K562 (cell line): ENCODE measurements at regions of chr3 and their contacts with region 1.

Region 1: DNA sequence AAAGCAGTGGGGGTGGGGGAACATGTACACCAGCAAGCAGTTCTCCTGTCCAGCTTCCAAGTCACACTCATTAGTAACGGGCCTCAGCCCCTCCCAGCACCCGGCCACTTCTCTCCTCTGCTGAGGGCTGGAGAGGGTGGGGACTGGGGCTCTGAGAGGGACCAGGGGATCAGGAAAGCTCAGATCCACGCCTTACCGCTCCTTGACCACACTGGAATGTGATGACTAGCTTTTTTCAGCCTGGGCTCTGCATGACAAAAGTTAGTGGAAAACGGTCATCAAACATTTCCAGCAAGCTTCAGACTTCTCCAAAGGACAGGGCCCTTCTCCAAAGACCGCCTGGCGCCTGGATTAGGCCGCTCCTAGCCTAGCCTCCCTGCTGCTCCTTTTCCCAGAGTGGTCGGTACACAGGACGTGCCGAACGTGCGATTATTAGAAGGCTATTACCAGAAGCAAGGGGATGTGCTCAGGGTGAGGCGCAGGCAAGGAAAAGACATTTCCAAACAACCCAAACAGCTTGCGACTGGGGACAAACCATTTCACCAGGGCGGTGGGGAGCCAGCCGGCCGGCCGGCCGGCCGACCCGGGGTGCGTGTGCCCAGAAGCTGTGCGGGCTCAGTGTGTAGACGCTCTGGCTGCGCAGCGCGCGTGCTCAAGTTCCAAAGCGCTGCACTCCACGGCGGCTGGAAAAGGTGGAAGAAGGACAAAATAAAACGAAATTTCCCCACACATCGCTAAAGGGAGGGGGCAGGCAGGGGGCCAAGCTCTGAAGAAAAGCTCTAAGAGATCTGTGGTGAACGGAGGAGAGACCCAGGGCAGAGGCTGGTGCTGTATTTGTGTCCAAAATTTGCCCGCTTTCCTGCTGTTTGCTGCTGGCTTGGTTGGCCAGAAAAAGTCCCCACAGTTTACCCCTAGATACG is 51.0 kb upstream of the SSR3 start:
- DNase-seq: peak; percentile 69 to 93 (median 76)
- ATAC-seq: peak; percentile 86
- H3K4me3 ChIP-seq: peak overlapping the region; percentile 39
- H3K27ac ChIP-seq: peak overlapping the region; percentile 96
- H3K4me1 ChIP-seq: peaks cover 18 to 44% of the 10 kb centered on the region in 2 experiments
- H3K27me3 ChIP-seq: no peaks in the 10 kb centered on the region
- CTCF ChIP-seq: no peak
- EP300 ChIP-seq: peak; percentile 49
- POLR2A ChIP-seq: peak; percentile 87
- RAD21 ChIP-seq: no peak

Region 2: GRCh38 chr3:156576651-156577343 is 29.1 kb before region 1 on chr3:
- CTCF ChIA-PET with region 1: no interaction called
- POLR2A ChIA-PET with region 1: interaction called, 5 read pairs
- in situ Hi-C with region 1: no loop called
- intact Hi-C with region 1: loop called (anchors 1 kb)
- DNase-seq: no peak
- ATAC-seq: peak; percentile 50
- H3K4me3 ChIP-seq: no peak overlapping the region
- H3K27ac ChIP-seq: no peak overlapping the region
- H3K4me1 ChIP-seq: peaks cover 3 to 32% of the 10 kb centered on the region in 2 experiments; a peak in 4 of 5 replicates
- H3K27me3 ChIP-seq: no peaks in the 10 kb centered on the region
- CTCF ChIP-seq: peak in 1 of 3 experiments; percentile 45; a peak in 3 of 6 replicates
- EP300 ChIP-seq: no peak
- POLR2A ChIP-seq: no peak
- RAD21 ChIP-seq: peak; percentile 59 to 67

Region 3: GRCh38 chr3:156582784-156583183 is 23.2 kb before region 1 on chr3:
- CTCF ChIA-PET with region 1: no interaction called
- POLR2A ChIA-PET with region 1: interaction called, 10 read pairs
- in situ Hi-C with region 1: no loop called
- intact Hi-C with region 1: loop called (anchors 1 kb)
- DNase-seq: no peak
- ATAC-seq: peak; percentile 9; the same call in 1 of the 3 replicates
- H3K4me3 ChIP-seq: no peak overlapping the region
- H3K27ac ChIP-seq: no peak overlapping the region
- H3K4me1 ChIP-seq: peaks cover 3 to 31% of the 10 kb centered on the region in 2 experiments; a peak in 4 of 5 replicates
- H3K27me3 ChIP-seq: no peaks in the 10 kb centered on the region
- CTCF ChIP-seq: no peak
- EP300 ChIP-seq: no peak
- POLR2A ChIP-seq: no peak
- RAD21 ChIP-seq: no peak

Region 4: GRCh38 chr3:156594219-156594683 is 11.7 kb before region 1 on chr3:
- CTCF ChIA-PET with region 1: no interaction called
- POLR2A ChIA-PET with region 1: interaction called, 16 read pairs
- in situ Hi-C with region 1: no loop called
- intact Hi-C with region 1: no loop called
- DNase-seq: no peak
- ATAC-seq: peak; percentile 55; the same call in 2 of the 3 replicates
- H3K4me3 ChIP-seq: no peak overlapping the region
- H3K27ac ChIP-seq: no peak overlapping the region
- H3K4me1 ChIP-seq: peaks cover 7 to 25% of the 10 kb centered on the region in 2 experiments; a peak in 3 of 5 replicates
- H3K27me3 ChIP-seq: no peaks in the 10 kb centered on the region
- CTCF ChIP-seq: no peak
- EP300 ChIP-seq: no peak
- POLR2A ChIP-seq: no peak
- RAD21 ChIP-seq: no peak

Region 5: GRCh38 chr3:156643729-156644389 is 37.9 kb after region 1 on chr3:
- CTCF ChIA-PET with region 1: no interaction called
- POLR2A ChIA-PET with region 1: no interaction called
- in situ Hi-C with region 1: no loop called
- intact Hi-C with region 1: loop called (anchors 2 kb)
- DNase-seq: peak; percentile 17 to 69 (median 42)
- ATAC-seq: peak; percentile 93
- H3K4me3 ChIP-seq: no peak overlapping the region
- H3K27ac ChIP-seq: peak overlapping the region; percentile 64; the same call in 2 of the 3 replicates
- H3K4me1 ChIP-seq: peaks cover 10 to 17% of the 10 kb centered on the region in 2 experiments; a peak in 4 of 5 replicates
- H3K27me3 ChIP-seq: no peaks in the 10 kb centered on the region
- CTCF ChIP-seq: no peak
- EP300 ChIP-seq: no peak
- POLR2A ChIP-seq: no peak
- RAD21 ChIP-seq: no peak